ENCODE measurements at regions of chr1 and their contacts with region 1.

Region 1: GRCh38 chr1:161225534-161226319 is at the start of gene TOMM40L:
- DNase-seq: peak; percentile 94
- CTCF ChIP-seq: peak; percentile 58

Region 2: GRCh38 chr1:160768295-160768657 is 457.5 kb before region 1 on chr1:
- CTCF ChIA-PET with region 1: no interaction called
- POLR2A ChIA-PET with region 1: interaction called, 11 read pairs
- DNase-seq: peak; percentile 77
- CTCF ChIP-seq: peak; percentile 93

Region 3: DNA sequence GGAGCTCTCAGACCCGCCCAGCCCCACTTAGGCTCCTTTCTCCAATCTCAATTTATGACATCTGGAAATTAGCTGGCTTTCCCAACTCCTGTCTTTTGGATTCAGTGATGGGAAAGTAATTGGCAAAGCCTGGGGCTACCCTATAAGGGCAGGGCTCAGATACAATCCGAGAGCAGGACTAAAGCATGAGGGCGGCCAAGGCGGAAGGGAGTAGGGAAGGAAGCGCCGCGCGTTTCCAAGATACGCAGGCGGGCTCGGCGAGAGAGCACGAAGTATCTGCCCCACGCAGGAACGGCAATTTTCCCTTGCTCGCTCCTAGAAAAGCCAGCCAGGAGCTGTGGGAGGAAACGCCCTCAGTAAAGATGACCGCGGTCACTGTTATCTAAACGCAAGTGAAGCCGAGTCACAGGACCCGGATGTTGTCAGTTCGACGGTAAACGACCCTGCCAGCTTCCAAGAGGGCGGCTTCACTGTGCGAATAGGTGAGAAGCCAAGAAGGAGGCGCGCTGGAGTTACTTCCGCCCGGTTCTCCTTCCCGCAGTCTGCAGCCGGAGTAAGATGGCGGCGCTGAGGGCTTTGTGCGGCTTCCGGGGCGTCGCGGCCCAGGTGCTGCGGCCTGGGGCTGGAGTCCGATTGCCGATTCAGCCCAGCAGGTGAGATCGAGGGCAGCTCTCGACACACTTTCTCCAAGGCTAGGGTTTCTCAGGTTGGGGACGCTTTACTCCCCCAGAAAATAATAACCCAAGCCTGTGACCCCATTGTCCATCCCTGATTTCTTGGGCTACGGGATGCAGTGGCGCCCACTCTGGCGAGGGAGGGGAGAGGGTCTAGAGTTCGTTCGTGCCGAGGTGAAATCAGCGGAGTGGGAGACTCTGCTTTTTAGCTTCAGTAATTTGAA is 23.6 kb before region 1 on chr1 and contains the start of gene NDUFS2:
- CTCF ChIA-PET with region 1: interaction called, 72 read pairs
- POLR2A ChIA-PET with region 1: interaction called, 4 read pairs
- DNase-seq: peak; percentile 94
- CTCF ChIP-seq: peak; percentile 10

Region 4: DNA sequence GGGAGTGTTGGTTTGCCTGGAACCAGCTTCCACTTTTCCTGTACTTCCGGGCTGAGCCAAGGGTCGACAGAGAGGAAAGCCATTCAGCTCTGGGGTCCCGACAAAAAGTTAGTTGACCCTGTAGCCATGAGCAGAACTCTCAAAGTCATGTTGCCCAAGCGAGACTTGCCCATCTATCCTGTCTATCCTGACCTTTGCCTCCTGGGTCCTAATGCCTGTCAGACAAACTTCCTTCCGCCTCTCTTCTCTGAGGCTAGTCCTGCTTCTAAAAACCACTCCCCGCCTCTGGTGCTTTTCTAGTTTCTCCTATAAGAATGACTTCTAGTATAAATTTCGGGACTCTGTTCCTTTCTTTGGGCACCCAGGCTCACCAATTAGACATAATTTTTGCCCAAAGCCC is 25.1 kb after region 1 on chr1:
- CTCF ChIA-PET with region 1: interaction called, 47 read pairs
- POLR2A ChIA-PET with region 1: interaction called, 5 read pairs
- DNase-seq: no peak
- CTCF ChIP-seq: no peak

Region 5: GRCh38 chr1:161324020-161324419 is 98.3 kb after region 1 on chr1:
- CTCF ChIA-PET with region 1: interaction called, 11 read pairs
- POLR2A ChIA-PET with region 1: no interaction called
- DNase-seq: no peak
- CTCF ChIP-seq: no peak

Region 6: GRCh38 chr1:161389691-161390558 is 164.2 kb after region 1 on chr1:
- CTCF ChIA-PET with region 1: interaction called, 195 read pairs
- POLR2A ChIA-PET with region 1: no interaction called
- DNase-seq: peak; percentile 94
- CTCF ChIP-seq: no peak